ENCODE measurements at regions of chr9 and their contacts with region 1.

Region 1: GRCh38 chr9:128863647-128864046 is 18.1 kb downstream of the KYAT1 start:
- DNase-seq: peak; percentile 77
- H3K4me3 ChIP-seq: no peak overlapping the region
- H3K27ac ChIP-seq: peak overlapping the region; percentile 1
- H3K4me1 ChIP-seq: peaks cover 23% of the 10 kb centered on the region
- H3K27me3 ChIP-seq: no peaks in the 10 kb centered on the region
- CTCF ChIP-seq: peak; percentile 96

Region 2: DNA sequence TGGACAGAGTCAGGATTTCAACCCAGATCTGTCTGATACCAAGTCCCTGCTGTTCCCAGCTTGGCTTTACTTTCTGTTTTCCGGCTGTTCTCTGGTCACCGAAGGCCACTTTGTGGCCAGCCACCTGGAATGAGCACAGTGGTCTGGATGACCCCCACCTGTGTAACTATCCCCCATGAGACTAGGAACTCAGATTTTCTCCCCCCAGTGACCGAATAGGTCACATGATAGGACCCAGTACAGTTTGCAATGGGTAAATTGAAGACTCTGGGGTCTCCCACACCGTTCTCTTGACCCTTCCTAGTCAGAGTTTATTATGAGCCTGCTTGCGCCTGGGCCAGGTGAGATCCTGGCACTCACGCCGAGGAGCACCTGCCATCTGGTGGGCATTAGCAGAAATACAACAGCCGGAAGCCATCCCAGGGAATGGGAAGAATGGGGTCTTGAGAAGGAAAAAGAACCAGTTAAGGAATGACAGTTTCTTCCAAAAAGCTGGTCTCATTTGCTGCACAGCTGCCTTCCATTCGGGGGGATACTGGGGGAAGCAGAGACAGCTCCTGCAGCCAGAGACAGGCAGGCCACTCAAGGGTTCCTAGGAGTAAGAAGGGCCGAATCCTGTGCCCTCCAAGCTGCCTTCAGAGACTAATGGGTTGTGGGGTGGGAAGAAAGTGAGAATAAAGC is 64.2 kb after region 1 on chr9:
- intact Hi-C with region 1: loop called (anchors 5 kb)
- DNase-seq: peak; percentile 51
- H3K4me3 ChIP-seq: no peak overlapping the region
- H3K27ac ChIP-seq: no peak overlapping the region
- H3K4me1 ChIP-seq: peaks cover 8% of the 10 kb centered on the region
- H3K27me3 ChIP-seq: no peaks in the 10 kb centered on the region
- CTCF ChIP-seq: peak; percentile 92

Measured in left ventricle myocardium inferior (tissue), 1 donor.